Activated CD8-positive, alpha-beta T cell treated with anti-CD3 and anti-CD28 coated beads, Interleukin-2, amount 10 ng/mL, durations not matched to agents 7 days and 5 days (primary cell): ENCODE measurements at regions of chr14 and their contacts with region 1.

Region 1: GRCh38 chr14:23174276-23175184 is 8.9 kb downstream of the SLC7A8 start:
- DNase-seq: no peak
- ATAC-seq: no peak
- H3K4me3 Mint-ChIP-seq: no peak overlapping the region
- H3K27ac Mint-ChIP-seq: no peak overlapping the region
- H3K4me1 Mint-ChIP-seq: peaks cover 4% of the 10 kb centered on the region
- H3K27me3 Mint-ChIP-seq: peaks cover 7% of the 10 kb centered on the region

Region 2: GRCh38 chr14:23160924-23161538 is 13.5 kb before region 1 on chr14:
- CTCF ChIA-PET with region 1: interaction called, 22 read pairs
- POLR2A ChIA-PET with region 1: no interaction called
- DNase-seq: no peak
- ATAC-seq: no peak
- H3K4me3 Mint-ChIP-seq: no peak overlapping the region
- H3K27ac Mint-ChIP-seq: no peak overlapping the region
- H3K4me1 Mint-ChIP-seq: peaks cover 11% of the 10 kb centered on the region
- H3K27me3 Mint-ChIP-seq: peaks cover 3% of the 10 kb centered on the region

Region 3: GRCh38 chr14:23186913-23187654 is 12.6 kb after region 1 on chr14:
- CTCF ChIA-PET with region 1: interaction called, 28 read pairs
- POLR2A ChIA-PET with region 1: interaction called, 3 read pairs
- DNase-seq: peak; percentile 47
- ATAC-seq: no peak
- H3K4me3 Mint-ChIP-seq: no peak overlapping the region
- H3K27ac Mint-ChIP-seq: no peak overlapping the region
- H3K4me1 Mint-ChIP-seq: no peaks in the 10 kb centered on the region
- H3K27me3 Mint-ChIP-seq: peaks cover 12% of the 10 kb centered on the region